Left cardiac atrium (tissue), 4 donors: ENCODE measurements at regions of chr5 and their contacts with region 1.

Region 1: GRCh38 chr5:173144200-173145176 is at the start of gene BNIP1:
- DNase-seq: peak; percentile 96
- ATAC-seq: peak; percentile 96
- total RNA-seq, gene BNIP1: 11.0 to 12.5 TPM

Region 2: GRCh38 chr5:172984243-172984953 is 160.1 kb before region 1 on chr5:
- intact Hi-C with region 1: loop called (anchors 10 kb)
- DNase-seq: peak; percentile 78
- ATAC-seq: peak; percentile 69 to 75

Region 3: GRCh38 chr5:173016621-173017047 is 127.9 kb before region 1 on chr5:
- intact Hi-C with region 1: loop called in 1 of 2 experiments (anchors 10 kb)
- DNase-seq: peak; percentile 28
- ATAC-seq: peak; percentile 74 to 93